ENCODE measurements at regions of chr1 and their contacts with region 1.

Region 1: GRCh38 chr1:16009030-16009709 is 5.1 kb downstream of the SRARP start:
- DNase-seq: peak; percentile 92
- H3K4me3 ChIP-seq: no peak overlapping the region
- H3K27ac ChIP-seq: no peak overlapping the region
- H3K4me1 ChIP-seq: peaks cover 0 to 26% (median 20%) of the 10 kb centered on the region in 4 donors
- H3K27me3 ChIP-seq: no peaks in the 10 kb centered on the region
- CTCF ChIP-seq: peak; percentile 97 to 99 (median 98)
- EP300 ChIP-seq: no peak
- POLR2A ChIP-seq: no peak

Region 2: DNA sequence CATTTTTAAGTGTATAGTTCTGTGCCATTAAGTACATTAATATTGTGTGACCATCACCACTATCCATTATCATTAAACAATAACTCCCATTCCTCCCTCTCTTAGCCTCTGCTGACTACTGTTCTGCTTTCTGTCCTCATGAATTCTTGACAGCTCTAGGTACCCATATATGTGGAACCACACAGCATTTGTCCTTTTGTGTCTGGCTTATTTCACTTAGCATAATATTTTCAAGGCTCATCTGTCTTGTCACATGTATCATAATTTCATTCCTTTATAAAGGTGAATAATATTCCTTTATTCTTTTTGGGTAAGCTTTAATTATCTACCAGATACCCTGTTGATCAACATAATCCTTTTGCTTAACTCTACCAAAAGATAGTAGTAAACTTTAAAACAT is 113.9 kb before region 1 on chr1:
- intact Hi-C with region 1: no loop called
- DNase-seq: no peak
- H3K4me3 ChIP-seq: no peak overlapping the region
- H3K27ac ChIP-seq: peak overlapping the region; percentile 73 to 79 (median 76)
- H3K4me1 ChIP-seq: peaks cover 0 to 51% (median 50%) of the 10 kb centered on the region in 4 donors
- H3K27me3 ChIP-seq: no peaks in the 10 kb centered on the region
- CTCF ChIP-seq: no peak
- EP300 ChIP-seq: no peak
- POLR2A ChIP-seq: no peak

Region 3: DNA sequence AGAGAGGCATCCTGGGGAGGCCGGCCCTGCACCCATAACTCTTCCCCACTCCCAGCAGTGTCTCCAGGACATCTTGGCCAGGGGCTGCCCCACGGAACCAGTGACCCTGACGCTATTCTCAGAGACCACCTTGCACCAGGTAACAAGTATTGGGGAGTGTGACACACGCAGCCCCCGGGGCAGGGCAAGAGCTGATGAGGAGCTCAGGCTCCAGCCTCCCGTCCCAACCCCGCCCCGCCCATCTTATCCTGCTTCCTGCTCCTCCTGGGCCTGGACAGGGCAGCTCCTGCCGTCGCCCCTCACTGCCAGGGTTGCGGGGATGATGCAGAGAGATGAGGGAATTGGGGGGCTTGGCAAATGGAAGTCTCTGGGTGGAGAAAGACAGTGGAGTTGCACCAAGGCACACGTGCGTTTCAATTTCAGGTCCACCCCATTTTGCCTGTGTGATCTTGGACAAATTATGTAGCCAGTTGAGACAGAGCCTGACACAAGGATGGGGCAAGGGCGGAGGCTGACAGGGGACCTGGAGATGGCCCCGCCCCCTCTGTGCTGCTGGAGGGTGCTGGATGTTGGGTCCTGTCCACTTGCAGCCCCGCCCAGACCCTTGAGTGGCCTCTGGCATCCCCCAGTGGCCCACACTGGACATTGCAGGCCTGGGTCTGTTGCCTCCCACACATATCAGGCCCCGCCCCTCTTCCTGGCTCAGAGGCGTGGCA is 23.4 kb after region 1 on chr1:
- intact Hi-C with region 1: loop called (anchors 1 kb)
- DNase-seq: peak; percentile 96
- H3K4me3 ChIP-seq: no peak overlapping the region
- H3K27ac ChIP-seq: no peak overlapping the region
- H3K4me1 ChIP-seq: peaks cover 0 to 13% (median 7%) of the 10 kb centered on the region in 4 donors
- H3K27me3 ChIP-seq: no peaks in the 10 kb centered on the region
- CTCF ChIP-seq: peak; percentile 99 to 100 (median 100)
- EP300 ChIP-seq: no peak
- POLR2A ChIP-seq: no peak

Measured in sigmoid colon (tissue), 7 donors.